AG04450 (cell line): ENCODE measurements at regions of chr5 and their contacts with region 1.

Region 1: DNA sequence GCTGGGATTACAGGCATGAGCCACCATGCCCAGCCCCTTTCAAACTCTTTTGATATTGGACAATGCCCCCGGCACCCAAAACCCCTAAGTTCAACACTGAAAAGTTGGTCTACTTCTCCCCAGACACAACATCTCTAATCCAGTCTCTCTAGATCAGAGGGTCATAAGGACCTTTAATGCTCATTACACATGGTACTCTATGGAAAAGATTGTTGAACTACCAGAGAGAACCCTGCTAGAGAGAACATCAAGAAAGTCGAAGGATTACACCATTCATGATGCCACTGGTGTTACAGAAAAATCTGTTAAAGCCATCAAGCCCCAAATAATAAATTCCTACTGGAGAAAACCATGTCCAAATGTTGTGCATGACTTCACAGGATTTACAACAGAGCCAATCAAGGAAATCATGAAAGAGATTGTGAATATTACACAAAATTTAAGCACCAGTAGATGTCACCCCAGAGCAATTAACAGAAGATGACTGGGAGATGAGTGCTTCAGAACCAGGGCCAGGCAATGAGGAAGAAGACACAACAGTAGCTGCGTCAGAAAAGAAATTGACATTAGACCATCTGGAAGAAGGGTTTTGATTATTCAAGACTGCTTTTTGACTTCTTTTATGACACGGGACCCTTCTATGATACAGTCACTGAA is 28.3 kb upstream of the NIPAL4 start:
- DNase-seq: peak; percentile 24
- H3K4me3 ChIP-seq: no peak overlapping the region
- H3K27ac ChIP-seq: no peak overlapping the region
- H3K27me3 ChIP-seq: no peaks in the 10 kb centered on the region
- CTCF ChIP-seq: peak; percentile 57

Region 2: DNA sequence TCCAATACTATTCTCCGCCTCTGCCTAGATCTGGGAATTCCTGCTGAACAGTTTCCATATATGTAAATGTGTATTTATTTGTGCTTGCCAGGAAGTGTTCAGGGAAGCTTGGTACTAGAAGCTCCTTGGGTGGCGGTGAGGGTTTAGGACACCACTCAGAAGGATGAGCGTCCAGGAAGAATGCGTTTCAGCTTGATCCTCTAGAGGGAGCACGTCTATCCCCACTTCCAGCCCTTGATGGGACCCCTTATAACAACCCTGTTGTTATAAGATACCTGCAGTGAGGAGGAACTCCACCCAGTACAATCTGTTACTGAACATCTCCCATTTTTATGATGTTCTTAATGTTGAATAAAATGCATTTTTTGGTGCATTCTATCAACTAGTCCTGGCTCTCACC is 76.9 kb before region 1 on chr5:
- CTCF ChIA-PET with region 1: no interaction called
- POLR2A ChIA-PET with region 1: no interaction called
- DNase-seq: no peak
- H3K4me3 ChIP-seq: no peak overlapping the region
- H3K27ac ChIP-seq: no peak overlapping the region
- H3K27me3 ChIP-seq: no peaks in the 10 kb centered on the region
- CTCF ChIP-seq: peak; percentile 41

Region 3: DNA sequence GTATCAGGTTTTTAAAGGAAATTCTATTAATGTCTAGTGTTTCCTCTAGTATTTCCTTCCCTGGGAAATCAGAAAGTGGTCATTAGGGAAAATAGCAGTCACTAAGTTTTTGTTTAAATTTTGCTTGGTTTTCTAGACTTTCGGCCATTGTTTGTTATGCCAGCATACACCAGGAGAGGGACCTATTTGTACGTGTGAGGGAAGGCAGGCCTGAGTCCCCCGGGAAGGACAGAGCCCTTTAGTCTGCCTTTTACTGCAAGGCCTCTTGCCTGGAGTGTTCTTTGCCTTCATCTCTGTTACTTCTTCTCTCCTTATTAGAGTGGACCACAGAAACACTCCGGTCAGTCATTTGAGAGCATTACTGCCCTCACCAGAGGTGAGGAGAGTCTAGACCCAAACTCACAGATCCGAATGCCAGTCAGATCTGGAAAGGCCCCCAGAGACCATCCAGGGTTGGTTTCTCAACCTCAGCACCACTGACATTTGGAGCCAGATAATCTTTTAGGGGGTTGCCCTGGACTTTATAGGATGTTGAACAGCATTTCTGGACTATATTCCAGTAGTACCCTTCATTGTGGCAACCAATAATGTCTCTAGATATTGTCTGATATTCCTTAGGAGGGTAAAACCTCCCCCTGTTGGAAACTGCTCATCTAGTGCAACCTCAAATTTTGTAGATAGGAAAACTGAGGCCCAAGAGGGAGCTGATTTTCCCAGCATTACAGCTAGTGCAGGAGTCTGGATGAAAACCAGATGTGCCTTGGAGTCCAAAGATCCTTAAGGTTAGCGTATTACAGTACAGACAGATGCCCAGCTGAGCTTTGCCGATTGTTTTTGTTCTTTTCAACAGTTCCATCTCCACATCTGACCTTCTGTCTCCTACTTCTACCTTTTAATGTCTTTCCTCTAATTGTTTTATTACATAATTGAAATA is 64.7 kb before region 1 on chr5:
- CTCF ChIA-PET with region 1: interaction called, 15 read pairs
- POLR2A ChIA-PET with region 1: no interaction called
- DNase-seq: peak; percentile 54
- H3K4me3 ChIP-seq: no peak overlapping the region
- H3K27ac ChIP-seq: no peak overlapping the region
- H3K27me3 ChIP-seq: no peaks in the 10 kb centered on the region
- CTCF ChIP-seq: peak; percentile 82

Region 4: DNA sequence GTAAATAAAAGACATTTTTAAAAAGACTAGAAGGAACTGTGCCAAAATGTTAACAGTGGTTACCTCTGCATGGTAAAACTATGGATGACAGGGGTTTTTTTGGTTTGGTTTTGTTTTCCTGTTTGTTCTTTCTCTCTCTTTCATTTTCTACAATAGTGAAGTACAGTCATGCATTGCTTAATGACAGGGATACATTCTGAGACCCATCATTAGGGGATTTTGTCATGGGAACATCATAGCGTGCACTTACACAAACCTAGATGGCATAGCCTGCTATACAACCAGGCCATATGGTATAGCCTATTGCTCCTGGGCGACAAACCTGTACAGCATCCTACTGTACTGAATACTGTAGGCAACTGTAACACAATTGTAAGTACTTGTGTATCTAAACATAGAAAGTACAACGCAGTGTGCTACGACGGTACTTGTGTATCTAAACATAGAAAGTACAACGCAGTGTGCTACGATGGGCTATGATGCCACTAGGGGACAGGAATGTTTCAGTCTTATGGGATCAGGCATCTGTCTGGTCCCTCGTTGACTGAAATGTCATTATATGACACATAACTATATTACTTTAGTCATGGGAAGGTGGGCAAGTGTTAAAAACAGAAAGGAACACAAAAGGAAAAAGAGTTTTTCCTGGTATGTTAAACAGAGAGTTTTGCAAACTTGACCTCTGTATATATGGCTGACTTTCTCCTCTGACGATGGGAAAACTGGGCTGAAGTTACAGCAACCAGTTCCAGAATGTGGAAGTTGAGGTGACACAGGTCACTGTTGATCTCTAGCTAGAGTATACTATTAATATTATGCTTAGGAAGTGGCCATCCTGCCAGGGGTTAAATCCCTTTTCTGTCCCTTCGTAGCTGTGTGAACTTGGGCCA is 151.3 kb after region 1 on chr5:
- CTCF ChIA-PET with region 1: no interaction called
- POLR2A ChIA-PET with region 1: no interaction called
- DNase-seq: no peak
- H3K4me3 ChIP-seq: no peak overlapping the region
- H3K27ac ChIP-seq: no peak overlapping the region
- H3K27me3 ChIP-seq: no peaks in the 10 kb centered on the region
- CTCF ChIP-seq: no peak

Region 5: DNA sequence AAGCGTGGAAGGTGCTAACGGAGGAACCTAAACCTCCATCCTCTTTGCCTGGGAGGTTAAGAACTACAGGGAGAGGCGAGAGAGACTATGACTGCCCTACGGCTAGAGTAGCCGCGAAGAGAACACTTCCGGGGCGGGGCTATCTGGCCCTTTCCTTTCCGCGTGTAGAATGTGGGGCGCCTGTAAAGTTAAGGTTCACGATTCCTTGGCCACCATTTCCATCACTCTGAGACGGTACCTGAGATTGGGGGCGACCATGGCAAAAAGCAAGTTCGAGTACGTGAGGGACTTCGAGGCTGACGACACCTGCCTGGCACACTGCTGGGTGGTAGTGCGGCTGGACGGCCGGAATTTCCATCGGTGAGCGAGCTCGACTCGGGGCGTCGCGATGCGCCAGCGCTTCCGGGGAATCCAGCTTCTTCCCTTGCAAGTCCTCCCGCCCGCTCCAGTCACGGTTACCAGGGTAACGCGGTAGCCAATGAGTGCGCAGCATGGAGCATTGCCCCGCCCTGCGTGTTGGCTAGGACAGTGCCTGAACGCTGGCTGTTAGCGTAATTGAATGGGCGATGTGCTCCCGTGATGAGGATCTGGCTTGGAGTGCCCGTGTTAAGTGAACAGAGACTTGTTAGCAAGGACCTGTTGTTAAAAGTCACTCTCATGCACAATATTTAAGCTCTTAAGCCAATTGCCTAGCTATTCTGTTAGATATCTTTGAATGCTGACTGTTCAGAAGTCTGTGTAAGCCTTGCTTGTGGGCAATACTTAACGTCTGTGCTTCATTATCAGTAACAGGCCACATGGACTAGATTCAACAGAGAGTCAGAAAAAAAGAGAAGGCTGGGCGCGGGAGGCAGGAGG is 299.8 kb after region 1 on chr5 and contains the start of gene THG1L:
- CTCF ChIA-PET with region 1: interaction called, 10 read pairs
- POLR2A ChIA-PET with region 1: no interaction called
- DNase-seq: peak; percentile 95
- H3K4me3 ChIP-seq: peak within 1 kb of the TSS; percentile 77
- H3K27ac ChIP-seq: peak within 1 kb of the TSS; percentile 88
- H3K27me3 ChIP-seq: no peaks in the 10 kb centered on the region
- CTCF ChIP-seq: no peak
- polyA plus RNA-seq, gene THG1L: 18.6 and 21.0 TPM in 2 replicates